Tibial artery (tissue), 4 donors: ENCODE measurements at regions of chr6 and their contacts with region 1.

Region 1: GRCh38 chr6:33391278-33391921 is at the start of gene KIFC1:
- DNase-seq: peak; percentile 98 to 100
- H3K4me3 ChIP-seq: peak within 1 kb of the TSS; percentile 47 to 50
- H3K27ac ChIP-seq: peak within 1 kb of the TSS; percentile 86 to 92
- H3K4me1 ChIP-seq: peaks cover 0 to 12% (median 7%) of the 10 kb centered on the region in 4 donors
- H3K27me3 ChIP-seq: no peaks in the 10 kb centered on the region
- CTCF ChIP-seq: peak; percentile 96 to 98

Region 2: DNA sequence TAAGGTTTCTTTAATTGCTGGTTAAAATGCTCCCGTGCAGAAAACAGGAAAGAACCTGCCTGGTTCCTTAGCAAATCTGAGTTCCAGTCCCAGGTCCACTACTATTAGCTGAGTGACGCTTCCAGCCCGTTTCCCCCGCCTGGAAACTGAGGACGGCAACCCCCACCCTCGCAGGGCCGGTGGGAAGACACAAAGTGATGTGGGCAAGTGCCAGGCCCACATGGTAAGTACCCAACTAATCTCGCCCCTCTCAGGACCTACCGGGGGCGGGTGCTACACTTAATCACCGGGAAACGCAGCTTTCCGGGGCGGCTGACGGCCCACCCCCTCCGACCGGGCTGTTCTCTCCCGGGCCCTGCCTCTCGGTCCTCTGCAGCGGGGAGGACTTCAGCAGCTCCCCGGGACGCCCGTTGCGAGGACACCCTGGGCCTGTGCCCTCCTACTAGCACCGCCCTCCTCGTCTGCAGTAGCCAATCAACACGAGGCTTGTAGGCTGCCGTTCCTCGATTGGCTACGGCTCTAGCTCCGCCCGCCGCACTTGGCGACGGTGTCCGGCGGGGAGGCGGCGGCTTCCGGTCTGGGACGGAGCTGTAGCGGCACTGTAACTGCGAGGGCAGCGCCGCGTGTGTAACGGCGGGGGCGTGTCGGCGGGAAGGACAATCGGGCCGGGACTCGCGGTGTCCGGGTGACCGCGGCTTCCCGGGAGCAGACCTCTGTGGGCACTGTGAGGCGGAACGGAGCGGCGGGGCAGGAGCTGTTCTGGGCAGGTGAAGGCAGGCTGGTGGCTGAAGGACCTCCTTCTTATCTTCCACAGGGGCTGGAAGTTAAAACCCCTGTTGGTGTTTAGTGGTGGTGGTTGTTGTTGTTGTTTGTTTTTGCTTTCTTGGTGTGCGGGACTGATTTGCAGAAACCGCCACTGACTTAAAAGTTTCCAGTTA is 62.9 kb after region 1 on chr6 and contains the start of gene ZBTB9:
- intact Hi-C with region 1: loop called (anchors 10 kb)
- DNase-seq: peak; percentile 96 to 98
- H3K4me3 ChIP-seq: peak within 1 kb of the TSS; percentile 73 to 82
- H3K27ac ChIP-seq: peak within 1 kb of the TSS; percentile 76 to 82
- H3K4me1 ChIP-seq: peaks cover 0 to 21% (median 18%) of the 10 kb centered on the region in 4 donors
- H3K27me3 ChIP-seq: no peaks in the 10 kb centered on the region
- CTCF ChIP-seq: peak in 1 of 2 experiments; percentile 1